PC-3 (cell line): ENCODE measurements at regions of chr2 and their contacts with region 1.

Region 1: DNA sequence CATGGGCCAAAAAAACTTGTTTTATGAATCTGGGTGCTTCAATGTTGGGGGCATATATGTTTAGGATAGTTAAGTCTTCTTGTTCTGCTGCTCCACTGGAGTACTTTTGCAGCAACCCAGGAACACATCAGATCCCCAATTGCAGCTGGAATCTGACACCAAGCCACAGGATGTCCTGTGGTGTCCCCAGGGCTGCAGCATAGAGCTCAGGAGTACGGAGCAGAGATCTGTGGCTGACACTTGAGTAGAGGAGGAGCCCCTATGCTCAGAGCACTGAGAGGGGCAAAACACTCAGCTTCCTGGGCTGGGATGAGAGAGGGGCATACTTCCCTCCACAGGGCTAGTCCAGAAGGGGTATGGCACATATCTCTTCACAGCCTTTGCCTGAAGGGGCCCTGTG is 138.9 kb upstream of the ERBB4 start:
- DNase-seq: no peak
- ATAC-seq: no peak
- H3K4me3 ChIP-seq: no peak overlapping the region
- H3K27ac ChIP-seq: no peak overlapping the region
- H3K4me1 ChIP-seq: no peaks in the 10 kb centered on the region
- H3K27me3 ChIP-seq: no peaks in the 10 kb centered on the region
- CTCF ChIP-seq: no peak

Region 2: DNA sequence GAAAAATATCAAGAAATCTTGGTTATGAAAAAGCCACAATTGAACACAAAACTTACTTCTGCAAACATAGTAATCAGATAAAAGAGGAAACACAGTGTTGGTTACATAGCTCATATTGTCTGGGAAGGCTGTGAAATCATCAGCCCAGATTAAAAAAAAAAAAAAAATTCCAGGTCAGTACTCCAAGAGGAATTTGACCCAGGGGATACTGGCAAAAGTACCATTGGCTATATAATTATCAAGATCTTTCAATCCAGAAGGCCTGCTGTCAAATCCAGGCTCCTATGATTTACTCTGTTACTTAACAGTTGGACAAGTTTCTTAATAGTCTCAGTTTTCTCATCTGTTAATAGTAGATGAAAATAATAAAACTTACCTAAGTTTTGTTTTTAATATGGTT is 486.8 kb after region 1 on chr2:
- CTCF ChIA-PET with region 1: no interaction called
- POLR2A ChIA-PET with region 1: interaction called, 14 read pairs
- intact Hi-C with region 1: no loop called
- DNase-seq: no peak
- ATAC-seq: no peak
- H3K4me3 ChIP-seq: no peak overlapping the region
- H3K27ac ChIP-seq: no peak overlapping the region
- H3K4me1 ChIP-seq: peaks cover 10% of the 10 kb centered on the region; the same call in 1 of the 2 replicates
- H3K27me3 ChIP-seq: no peaks in the 10 kb centered on the region
- CTCF ChIP-seq: no peak